Activated T-helper 2 cell treated with anti-CD3 and anti-CD28 coated beads, Interferon-gamma antibody, Interleukin-2, Interleukin-4, amounts not matched to agents 10 μg/mL and 5 μg/mL and 100 μg/mL, durations not matched to agents 14 hours and 24 hours and 36 hours (primary cell): ENCODE measurements at regions of chr21 and their contacts with region 1.

Region 1: GRCh38 chr21:38766987-38767722 is 38.6 kb upstream of the ETS2 start:
- DNase-seq: peak; percentile 75
- H3K4me3 Mint-ChIP-seq: peak overlapping the region; percentile 66
- H3K27ac Mint-ChIP-seq: peak overlapping the region; percentile 92
- H3K4me1 Mint-ChIP-seq: peaks cover 43% of the 10 kb centered on the region
- H3K27me3 Mint-ChIP-seq: peaks cover 2% of the 10 kb centered on the region

Region 2: DNA sequence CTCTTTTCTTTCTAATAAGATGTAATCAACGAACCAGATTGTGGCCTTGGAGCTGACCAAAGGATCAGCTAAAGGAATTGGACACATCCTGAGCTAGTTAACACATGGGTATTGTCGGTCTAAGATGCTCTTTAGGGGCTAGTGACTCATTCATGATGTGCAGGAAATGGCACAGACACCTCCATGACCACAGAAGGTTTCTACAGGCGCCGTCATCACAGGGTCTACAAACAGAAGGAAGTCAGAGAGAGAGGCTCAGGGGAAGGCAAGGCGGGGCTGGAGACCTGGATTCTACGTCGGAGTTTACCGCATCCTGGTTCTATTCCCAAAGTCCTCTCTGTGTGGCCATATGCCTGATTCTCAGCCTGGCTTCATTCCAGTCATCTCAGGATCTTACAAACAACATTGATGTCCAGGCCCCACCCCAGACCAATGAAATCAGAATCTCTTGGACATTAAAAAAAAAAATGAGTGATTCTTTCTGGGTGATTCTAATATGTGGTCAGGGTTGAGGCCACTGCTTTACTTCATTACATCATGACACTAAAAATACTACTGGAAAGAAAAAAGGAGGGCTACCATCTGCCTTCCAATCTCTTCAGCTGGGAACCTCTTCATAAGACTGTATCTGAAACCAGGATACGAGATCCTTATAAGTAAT is 522.1 kb before region 1 on chr21:
- intact Hi-C with region 1: loop called (anchors 10 kb)
- DNase-seq: peak; percentile 54
- H3K4me3 Mint-ChIP-seq: peak overlapping the region; percentile 1
- H3K27ac Mint-ChIP-seq: peak overlapping the region; percentile 81
- H3K4me1 Mint-ChIP-seq: peaks cover 35% of the 10 kb centered on the region
- H3K27me3 Mint-ChIP-seq: peaks cover 15% of the 10 kb centered on the region

Region 3: DNA sequence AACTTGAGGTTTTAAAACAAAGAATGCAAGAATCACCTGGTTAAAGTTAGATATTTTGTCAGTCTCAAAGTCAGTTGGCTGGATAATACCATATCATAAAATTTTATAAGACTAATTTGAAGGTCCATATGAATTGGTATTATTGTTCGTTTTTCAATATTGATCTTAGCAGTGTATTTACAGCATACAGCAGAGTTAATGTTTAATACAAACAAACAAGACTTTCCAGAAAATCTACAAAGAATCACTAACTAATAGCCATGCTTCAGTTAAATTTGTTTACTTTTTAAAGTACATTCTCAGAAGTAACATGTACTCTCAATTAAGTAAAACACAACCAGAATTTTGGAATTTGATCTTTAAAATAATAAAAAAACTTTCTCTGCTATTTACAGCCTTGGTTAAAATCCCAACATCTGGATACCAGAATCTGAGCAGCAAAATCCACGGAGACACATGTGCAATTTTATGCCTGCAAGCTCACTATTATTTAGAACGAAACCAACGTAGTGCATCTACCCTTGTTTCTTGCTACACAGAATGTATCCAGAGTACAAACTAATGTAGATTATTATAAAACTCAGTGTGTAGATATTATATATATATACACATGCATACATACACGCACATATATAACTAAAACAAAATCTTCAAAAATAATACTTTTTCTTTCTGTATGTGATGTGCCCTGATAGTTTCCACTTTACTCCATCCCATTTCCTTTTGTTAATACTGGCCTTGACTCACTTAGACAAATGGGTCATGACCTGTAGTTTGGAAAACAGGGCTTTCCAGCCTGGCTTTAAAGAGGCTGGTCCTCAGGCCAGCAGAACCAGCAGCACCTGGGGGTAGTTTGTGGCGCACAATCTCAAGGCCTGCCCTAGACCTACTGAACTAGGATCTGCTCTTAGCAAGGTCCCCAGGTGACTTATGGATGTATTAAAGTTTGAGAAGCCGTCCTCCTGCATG is 205.3 kb before region 1 on chr21:
- intact Hi-C with region 1: no loop called
- DNase-seq: no peak
- H3K4me3 Mint-ChIP-seq: no peak overlapping the region
- H3K27ac Mint-ChIP-seq: no peak overlapping the region
- H3K4me1 Mint-ChIP-seq: no peaks in the 10 kb centered on the region
- H3K27me3 Mint-ChIP-seq: peaks cover 31% of the 10 kb centered on the region

Region 4: DNA sequence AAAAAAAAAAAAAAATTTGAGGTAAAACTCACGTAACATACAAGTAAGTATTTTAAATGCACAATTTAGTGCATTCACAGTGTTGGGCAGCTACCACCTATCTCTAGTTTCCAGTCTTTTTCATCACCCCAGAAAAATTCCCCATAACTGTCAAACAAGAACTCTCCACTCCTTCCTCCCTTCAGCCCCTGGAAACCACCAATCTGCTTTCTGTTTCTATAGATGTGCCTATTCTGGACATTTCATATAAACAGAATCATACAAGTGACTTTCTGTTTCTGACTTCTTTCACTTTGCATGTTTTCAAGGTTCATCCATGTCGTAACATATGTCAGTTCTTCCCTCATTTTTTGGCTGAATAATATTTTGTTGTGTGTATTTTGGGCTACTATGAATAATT is 13.7 kb after region 1 on chr21:
- intact Hi-C with region 1: loop called (anchors 1 kb)
- DNase-seq: peak; percentile 20
- H3K4me3 Mint-ChIP-seq: peak overlapping the region; percentile 23
- H3K27ac Mint-ChIP-seq: peak overlapping the region; percentile 70
- H3K4me1 Mint-ChIP-seq: peaks cover 45% of the 10 kb centered on the region
- H3K27me3 Mint-ChIP-seq: no peaks in the 10 kb centered on the region

Region 5: GRCh38 chr21:38811257-38811656 is 44.1 kb after region 1 on chr21:
- intact Hi-C with region 1: no loop called
- DNase-seq: no peak
- H3K4me3 Mint-ChIP-seq: no peak overlapping the region
- H3K27ac Mint-ChIP-seq: no peak overlapping the region
- H3K4me1 Mint-ChIP-seq: peaks cover 55% of the 10 kb centered on the region
- H3K27me3 Mint-ChIP-seq: no peaks in the 10 kb centered on the region

Region 6: DNA sequence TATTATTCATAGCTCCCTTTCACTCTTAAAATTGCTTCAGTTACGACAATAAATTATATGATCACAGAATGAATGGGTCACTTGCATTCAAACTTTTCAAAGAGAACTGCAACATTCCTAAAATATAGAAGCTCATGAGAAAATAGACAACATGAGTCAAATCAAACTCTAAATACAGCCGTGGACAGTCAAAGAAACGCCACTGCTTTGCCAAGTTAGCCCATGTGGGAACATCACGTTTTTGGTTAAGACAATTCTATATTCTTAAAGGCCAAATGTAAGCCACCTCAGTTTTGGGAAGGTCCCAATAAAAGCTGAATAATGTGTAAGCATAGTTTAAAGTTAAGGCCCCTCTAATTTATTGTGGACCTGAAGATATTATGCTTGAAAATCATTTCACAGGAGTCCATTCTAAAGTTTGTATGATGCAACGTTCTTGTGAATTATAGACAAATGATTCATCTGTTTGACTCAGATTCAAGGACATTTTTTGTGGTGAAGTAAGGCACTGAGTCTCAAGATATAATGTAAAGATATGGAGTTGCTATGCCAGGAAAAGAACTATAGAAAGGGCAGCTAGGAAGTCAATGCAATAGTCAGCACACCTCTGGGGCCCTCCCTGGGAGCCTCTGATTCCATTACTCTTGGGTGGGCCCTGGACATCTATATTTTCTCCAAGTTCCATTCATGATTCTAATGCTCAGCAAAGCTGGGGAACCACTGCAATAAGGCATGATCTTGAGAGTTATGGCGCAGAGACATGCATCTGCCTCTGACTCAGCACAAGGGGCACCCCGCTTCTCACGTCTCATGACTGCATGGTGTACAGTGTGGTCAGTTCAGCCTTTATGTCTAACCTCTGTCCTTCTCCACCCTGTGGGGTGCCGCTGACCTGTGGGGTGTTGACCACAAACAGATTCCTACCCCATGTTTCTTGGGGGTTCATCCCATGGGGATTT is 72.5 kb after region 1 on chr21:
- intact Hi-C with region 1: loop called (anchors 1 kb)
- DNase-seq: no peak
- H3K4me3 Mint-ChIP-seq: no peak overlapping the region
- H3K27ac Mint-ChIP-seq: peak overlapping the region; percentile 65
- H3K4me1 Mint-ChIP-seq: peaks cover 36% of the 10 kb centered on the region
- H3K27me3 Mint-ChIP-seq: no peaks in the 10 kb centered on the region

Region 7: GRCh38 chr21:38958940-38959691 is 192.0 kb after region 1 on chr21:
- intact Hi-C with region 1: loop called (anchors 1 kb)
- DNase-seq: no peak
- H3K4me3 Mint-ChIP-seq: peak overlapping the region; percentile 61
- H3K27ac Mint-ChIP-seq: peak overlapping the region; percentile 96
- H3K4me1 Mint-ChIP-seq: peaks cover 64% of the 10 kb centered on the region
- H3K27me3 Mint-ChIP-seq: no peaks in the 10 kb centered on the region

Region 8: DNA sequence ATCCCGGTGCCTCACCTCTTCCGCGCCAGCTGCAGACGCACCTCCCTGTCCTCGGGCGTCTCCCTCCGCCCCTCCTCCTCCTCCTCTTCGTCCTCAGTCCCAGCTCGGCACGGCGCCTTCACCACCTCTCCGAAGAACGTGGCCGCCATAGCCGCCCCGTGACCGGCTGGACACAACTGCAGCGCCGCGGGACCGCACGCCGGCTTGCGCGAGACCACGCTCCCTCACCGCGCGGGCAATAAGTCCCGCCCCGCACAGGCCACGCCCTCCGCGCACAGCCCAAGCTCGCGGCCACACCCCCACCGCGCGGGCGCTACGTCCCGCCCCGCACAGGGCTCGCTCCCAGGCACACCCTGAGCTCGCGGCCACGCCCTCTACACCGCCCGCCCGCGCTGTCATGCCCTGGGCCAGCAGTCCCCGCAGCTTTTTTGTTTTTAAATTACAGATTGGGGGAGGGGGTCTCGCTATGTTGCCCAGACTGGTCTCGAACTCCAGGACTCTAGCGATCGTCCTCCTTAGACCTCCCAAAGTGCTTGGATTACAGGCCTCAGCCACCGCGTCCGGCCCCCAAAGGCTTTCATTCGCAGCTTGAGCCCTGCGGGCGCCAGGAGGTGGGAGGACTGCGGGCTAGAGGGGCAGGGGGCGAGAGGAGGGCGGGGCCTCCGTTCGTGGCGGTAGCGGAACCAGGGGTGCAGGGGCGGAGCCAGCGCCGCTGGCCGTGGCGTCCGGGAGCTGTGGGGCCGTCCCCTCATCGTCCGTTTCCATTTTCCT is 416.3 kb after region 1 on chr21 and contains the start of gene PSMG1:
- intact Hi-C with region 1: loop called (anchors 1 kb)
- DNase-seq: peak; percentile 92
- H3K4me3 Mint-ChIP-seq: peak within 1 kb of the TSS; percentile 99
- H3K27ac Mint-ChIP-seq: peak within 1 kb of the TSS; percentile 98
- H3K4me1 Mint-ChIP-seq: peaks cover 57% of the 10 kb centered on the region
- H3K27me3 Mint-ChIP-seq: no peaks in the 10 kb centered on the region
- total RNA-seq, gene PSMG1: 79.7 and 85.2 TPM in 2 replicates

Region 9: DNA sequence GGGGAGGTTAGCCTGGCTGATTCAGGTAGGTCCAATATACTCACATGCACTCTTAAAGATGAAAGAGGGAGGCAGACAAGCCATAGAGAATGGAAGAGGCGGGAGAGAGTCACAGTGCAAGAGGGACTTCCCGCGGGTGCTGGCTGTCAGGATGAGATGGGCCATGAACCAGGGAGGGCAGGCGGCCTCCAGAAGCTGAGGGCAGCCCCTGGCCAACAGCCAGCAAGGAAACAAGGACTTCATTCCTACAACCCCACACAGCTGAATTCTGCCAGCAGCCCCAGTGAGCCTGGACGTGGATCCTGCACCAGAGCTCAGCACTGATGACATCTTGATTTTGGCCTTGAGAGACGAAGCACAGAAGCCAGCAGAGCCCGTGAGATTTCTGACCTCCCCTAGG is 830.4 kb after region 1 on chr21:
- intact Hi-C with region 1: no loop called
- DNase-seq: no peak
- H3K4me3 Mint-ChIP-seq: no peak overlapping the region
- H3K27ac Mint-ChIP-seq: no peak overlapping the region
- H3K4me1 Mint-ChIP-seq: no peaks in the 10 kb centered on the region
- H3K27me3 Mint-ChIP-seq: peaks cover 2% of the 10 kb centered on the region